ENCODE measurements at regions of chr4 and their contacts with region 1.

Region 1: GRCh38 chr4:83217721-83218522 is 66.7 kb downstream of the COQ2 start:
- DNase-seq: peak; percentile 29 to 89 (median 71)
- ATAC-seq: peak; percentile 89 to 95 (median 92)
- H3K4me3 ChIP-seq: peak overlapping the region in 1 of 2 donors; percentile 27
- H3K4me3 Mint-ChIP-seq: peak overlapping the region; percentile 49 to 88 (median 81)
- H3K27ac ChIP-seq: peak overlapping the region; percentile 89
- H3K27ac Mint-ChIP-seq: peak overlapping the region; percentile 96
- H3K4me1 ChIP-seq: peaks cover 53 to 68% of the 10 kb centered on the region in 2 experiments
- H3K4me1 Mint-ChIP-seq: peaks cover 74 to 89% (median 79%) of the 10 kb centered on the region in 3 donors
- H3K27me3 ChIP-seq: no peaks in the 10 kb centered on the region
- H3K27me3 Mint-ChIP-seq: no peaks in the 10 kb centered on the region

Region 2: DNA sequence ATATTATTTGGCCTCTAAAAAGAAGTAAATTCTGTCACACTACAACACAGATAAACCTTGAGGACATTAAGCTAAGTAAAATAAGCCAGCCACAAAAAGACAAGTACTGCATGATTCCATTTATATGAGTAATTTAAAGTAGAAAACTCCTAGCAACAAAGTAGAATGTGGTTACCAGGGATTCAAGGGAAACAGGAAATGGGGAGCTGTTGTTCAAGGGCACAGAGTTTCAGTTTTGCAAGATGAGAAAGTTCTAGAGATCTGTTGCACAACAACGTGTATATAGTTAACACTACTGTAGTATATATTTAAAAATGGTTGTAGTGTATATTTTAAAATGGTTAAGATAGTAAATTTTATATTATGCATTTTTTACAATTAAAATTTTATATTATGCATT is 352.3 kb before region 1 on chr4:
- CTCF ChIA-PET with region 1: no interaction called
- POLR2A ChIA-PET with region 1: no interaction called
- DNase-seq: peak in 2 of 35 experiments; percentile 6 to 48
- ATAC-seq: peak; percentile 48 to 75 (median 68)
- H3K4me3 ChIP-seq: no peak overlapping the region
- H3K4me3 Mint-ChIP-seq: peak overlapping the region; percentile 31 to 57 (median 40)
- H3K27ac ChIP-seq: peak overlapping the region; percentile 28
- H3K27ac Mint-ChIP-seq: peak overlapping the region; percentile 82 to 90
- H3K4me1 ChIP-seq: peaks cover 4 to 15% of the 10 kb centered on the region in 2 experiments
- H3K4me1 Mint-ChIP-seq: peaks cover 24 to 29% (median 26%) of the 10 kb centered on the region in 3 donors
- H3K27me3 ChIP-seq: no peaks in the 10 kb centered on the region
- H3K27me3 Mint-ChIP-seq: no peaks in the 10 kb centered on the region

Region 3: DNA sequence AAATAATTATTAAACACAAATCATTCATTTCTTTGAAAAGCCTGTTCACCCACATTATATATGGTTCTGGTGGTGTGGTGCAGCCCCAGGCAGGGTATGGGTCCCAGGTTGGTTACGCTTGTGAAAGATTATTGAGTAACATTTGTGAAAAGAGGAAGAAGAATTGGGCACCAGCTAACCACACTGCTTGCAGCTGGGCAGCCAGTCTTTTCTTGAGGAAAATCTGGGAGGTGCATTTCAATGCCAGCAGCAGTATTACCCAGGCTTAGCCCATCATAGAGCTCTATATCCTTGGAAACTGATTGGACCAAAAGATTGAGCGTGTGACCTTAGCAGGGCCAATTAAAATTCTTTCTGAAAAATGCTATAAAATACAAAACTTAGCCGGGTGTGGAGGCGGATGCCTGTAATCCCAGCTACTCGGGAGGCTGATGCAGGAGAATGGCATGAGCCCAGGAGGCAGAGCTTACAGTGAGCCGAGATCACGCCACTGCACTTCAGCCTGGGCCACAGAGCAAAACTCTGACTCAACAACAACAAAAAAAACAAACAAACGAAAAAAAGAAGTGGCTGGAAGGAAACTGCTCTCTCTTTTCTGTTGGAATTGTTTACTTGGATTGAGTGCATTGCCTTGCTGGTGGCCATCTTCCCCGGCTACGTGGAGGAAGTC is 93.7 kb before region 1 on chr4:
- CTCF ChIA-PET with region 1: interaction called in 1 of 2 experiments, 10 read pairs
- POLR2A ChIA-PET with region 1: no interaction called
- DNase-seq: no peak
- ATAC-seq: no peak
- H3K4me3 ChIP-seq: no peak overlapping the region
- H3K4me3 Mint-ChIP-seq: peak overlapping the region in 1 of 3 donors; percentile 6
- H3K27ac ChIP-seq: no peak overlapping the region
- H3K27ac Mint-ChIP-seq: no peak overlapping the region
- H3K4me1 ChIP-seq: peaks cover 5 to 16% of the 10 kb centered on the region in 2 experiments
- H3K4me1 Mint-ChIP-seq: peaks cover 12 to 32% (median 26%) of the 10 kb centered on the region in 3 donors
- H3K27me3 ChIP-seq: no peaks in the 10 kb centered on the region
- H3K27me3 Mint-ChIP-seq: no peaks in the 10 kb centered on the region

Region 4: DNA sequence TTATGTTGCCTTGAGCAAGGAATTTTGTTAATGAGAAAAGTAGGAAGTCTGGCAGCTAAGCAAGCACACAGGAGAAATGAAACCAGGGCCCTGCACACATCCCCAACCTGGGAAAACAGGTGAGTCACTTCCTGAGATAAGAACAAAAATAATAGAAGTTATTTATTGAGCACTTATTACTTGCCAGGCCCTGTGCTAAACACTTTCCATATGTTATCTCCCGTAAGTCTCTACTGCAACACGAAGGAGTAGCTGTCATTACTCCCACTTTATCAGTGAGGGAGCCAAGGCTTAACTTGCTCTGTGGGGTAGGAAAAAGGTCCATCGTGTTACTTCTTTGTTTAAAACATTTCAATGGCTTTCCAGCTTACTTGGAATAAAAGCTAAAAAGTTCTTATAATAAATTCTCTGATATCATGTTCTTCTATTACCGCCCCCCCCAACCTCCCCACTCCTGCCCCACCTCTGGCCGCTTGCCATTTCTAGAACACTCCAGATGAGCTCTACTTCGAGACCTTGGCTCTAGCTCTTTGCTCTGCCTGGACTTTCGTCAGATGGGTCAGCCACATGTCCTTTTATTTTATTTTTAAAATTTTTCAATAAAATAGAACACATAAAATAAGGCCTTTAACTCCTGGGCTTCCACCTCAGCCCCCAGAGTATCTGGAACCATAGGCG is 67.1 kb before region 1 on chr4:
- CTCF ChIA-PET with region 1: no interaction called
- POLR2A ChIA-PET with region 1: interaction called in 1 of 2 experiments, 10 read pairs
- DNase-seq: no peak
- ATAC-seq: no peak
- H3K4me3 ChIP-seq: no peak overlapping the region
- H3K4me3 Mint-ChIP-seq: no peak overlapping the region
- H3K27ac ChIP-seq: no peak overlapping the region
- H3K27ac Mint-ChIP-seq: no peak overlapping the region
- H3K4me1 ChIP-seq: peaks cover 7% of the 10 kb centered on the region in 2 experiments
- H3K4me1 Mint-ChIP-seq: peaks cover 25 to 31% (median 27%) of the 10 kb centered on the region in 3 donors
- H3K27me3 ChIP-seq: no peaks in the 10 kb centered on the region
- H3K27me3 Mint-ChIP-seq: no peaks in the 10 kb centered on the region

Region 5: GRCh38 chr4:83252782-83253405 is 35.0 kb after region 1 on chr4:
- CTCF ChIA-PET with region 1: interaction called, 4 to 14 read pairs
- POLR2A ChIA-PET with region 1: interaction called in 1 of 2 experiments, 5 read pairs
- DNase-seq: peak; percentile 38 to 88 (median 72)
- ATAC-seq: peak; percentile 75 to 94 (median 88)
- H3K4me3 ChIP-seq: no peak overlapping the region
- H3K4me3 Mint-ChIP-seq: peak overlapping the region in 1 of 3 donors; percentile 8
- H3K27ac ChIP-seq: no peak overlapping the region
- H3K27ac Mint-ChIP-seq: peak overlapping the region; percentile 65 to 71
- H3K4me1 ChIP-seq: peaks cover 12 to 19% of the 10 kb centered on the region in 2 experiments
- H3K4me1 Mint-ChIP-seq: peaks cover 22 to 30% (median 29%) of the 10 kb centered on the region in 3 donors
- H3K27me3 ChIP-seq: no peaks in the 10 kb centered on the region
- H3K27me3 Mint-ChIP-seq: no peaks in the 10 kb centered on the region

Region 6: DNA sequence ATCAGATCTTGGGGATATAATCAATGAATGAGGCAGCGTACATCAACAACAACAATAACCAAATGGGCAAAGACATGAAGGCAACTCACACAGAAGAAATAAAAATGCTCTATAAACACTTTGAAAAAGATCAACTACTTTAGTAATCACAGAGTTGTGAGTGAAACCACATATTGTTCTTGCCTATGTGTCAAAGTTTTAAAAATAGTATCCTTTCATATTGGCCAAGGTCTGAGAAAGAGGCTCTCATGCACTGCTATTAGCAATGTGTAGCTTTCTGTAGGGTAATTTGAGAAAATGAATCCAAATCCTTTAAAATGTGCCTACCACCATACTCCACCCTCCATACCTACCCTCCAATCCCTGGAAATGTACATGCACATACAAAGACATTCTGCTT is 41.7 kb after region 1 on chr4:
- CTCF ChIA-PET with region 1: interaction called, 5 to 12 read pairs
- POLR2A ChIA-PET with region 1: no interaction called
- DNase-seq: no peak
- ATAC-seq: no peak
- H3K4me3 ChIP-seq: no peak overlapping the region
- H3K4me3 Mint-ChIP-seq: no peak overlapping the region
- H3K27ac ChIP-seq: no peak overlapping the region
- H3K27ac Mint-ChIP-seq: no peak overlapping the region
- H3K4me1 ChIP-seq: peaks cover 0 to 4% of the 10 kb centered on the region in 2 experiments
- H3K4me1 Mint-ChIP-seq: peaks cover 8 to 18% (median 9%) of the 10 kb centered on the region in 3 donors
- H3K27me3 ChIP-seq: no peaks in the 10 kb centered on the region
- H3K27me3 Mint-ChIP-seq: no peaks in the 10 kb centered on the region

Measured in T-cell (primary cell).